SK-N-SH (cell line): ENCODE measurements at regions of chr5 and their contacts with region 1.

Region 1: DNA sequence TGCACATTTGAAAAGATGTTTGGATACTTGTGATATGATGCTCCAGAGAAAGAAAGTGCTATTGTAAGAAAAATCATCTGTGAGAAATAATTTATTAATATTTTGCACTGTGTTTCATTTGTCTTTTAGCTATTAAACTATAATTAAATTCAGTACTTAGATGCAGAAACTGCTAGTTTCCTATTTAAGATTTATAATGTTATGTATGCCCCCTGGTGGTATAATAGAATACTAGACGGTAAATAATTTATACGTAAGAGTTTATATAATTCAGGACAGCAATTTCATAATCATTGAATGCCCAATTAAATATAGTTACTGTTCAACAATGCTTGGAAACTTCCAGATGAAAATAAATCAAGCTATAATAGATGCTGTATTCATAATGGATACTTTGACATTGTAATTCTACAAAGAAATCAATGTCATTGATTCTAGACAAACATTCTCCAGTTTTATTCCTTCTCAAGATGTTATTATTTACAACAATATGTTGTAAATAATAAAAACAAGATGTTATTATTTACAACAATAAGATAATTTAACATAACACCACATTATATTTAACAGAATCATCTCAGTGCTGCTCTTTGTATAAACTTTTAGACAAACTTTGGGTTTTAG is 101.0 kb downstream of the TMEM232 start:
- DNase-seq: peak; percentile 12
- H3K4me3 ChIP-seq: no peak overlapping the region
- H3K27ac ChIP-seq: no peak overlapping the region
- H3K4me1 ChIP-seq: peaks cover 2 to 4% of the 10 kb centered on the region in 2 experiments; a peak in 2 of 4 replicates
- H3K27me3 ChIP-seq: no peaks in the 10 kb centered on the region
- CTCF ChIP-seq: peak; percentile 78
- EP300 ChIP-seq: no peak
- RAD21 ChIP-seq: peak; percentile 58

Region 2: GRCh38 chr5:109688971-109689739 is 936.3 kb before region 1 on chr5:
- CTCF ChIA-PET with region 1: interaction called, 10 read pairs
- POLR2A ChIA-PET with region 1: no interaction called
- DNase-seq: peak; percentile 96
- H3K4me3 ChIP-seq: peak overlapping the region; percentile 78 to 93
- H3K27ac ChIP-seq: peak overlapping the region; percentile 89 to 95
- H3K4me1 ChIP-seq: peaks cover 2 to 25% of the 10 kb centered on the region in 2 experiments; a peak in 3 of 4 replicates
- H3K27me3 ChIP-seq: no peaks in the 10 kb centered on the region
- CTCF ChIP-seq: no peak
- EP300 ChIP-seq: peak in 1 of 2 experiments; percentile 47; a peak in 2 of 4 replicates
- RAD21 ChIP-seq: no peak; the same call in 1 of the 2 replicates

Region 3: GRCh38 chr5:110441035-110441434 is 184.5 kb before region 1 on chr5:
- CTCF ChIA-PET with region 1: interaction called, 43 read pairs
- POLR2A ChIA-PET with region 1: no interaction called
- DNase-seq: peak; percentile 17
- H3K4me3 ChIP-seq: no peak overlapping the region
- H3K27ac ChIP-seq: no peak overlapping the region
- H3K4me1 ChIP-seq: no peaks in the 10 kb centered on the region
- H3K27me3 ChIP-seq: no peaks in the 10 kb centered on the region
- CTCF ChIP-seq: peak; percentile 64
- EP300 ChIP-seq: no peak
- RAD21 ChIP-seq: peak; percentile 83

Region 4: DNA sequence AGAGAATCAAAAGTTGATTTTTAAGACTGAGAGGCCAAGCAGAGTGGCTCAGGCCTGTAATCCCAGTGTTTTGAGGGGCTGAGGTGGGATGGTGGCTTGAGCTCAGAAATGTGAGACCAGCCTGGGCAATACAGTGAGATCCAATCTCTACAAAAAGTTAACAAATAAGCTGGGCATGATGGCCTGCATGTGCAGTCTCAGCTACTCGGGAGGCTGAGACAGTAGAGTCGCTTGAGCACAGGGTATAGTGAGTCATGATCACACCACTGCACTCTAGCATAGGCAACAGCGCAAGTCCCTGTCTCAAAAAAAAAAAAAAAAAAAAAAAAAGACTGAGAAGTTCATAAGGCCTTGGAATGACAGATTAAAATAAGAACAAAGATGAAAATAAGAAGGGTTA is 76.2 kb before region 1 on chr5:
- CTCF ChIA-PET with region 1: no interaction called
- POLR2A ChIA-PET with region 1: no interaction called
- DNase-seq: no peak
- H3K4me3 ChIP-seq: no peak overlapping the region
- H3K27ac ChIP-seq: no peak overlapping the region
- H3K4me1 ChIP-seq: no peaks in the 10 kb centered on the region
- H3K27me3 ChIP-seq: no peaks in the 10 kb centered on the region
- CTCF ChIP-seq: no peak
- EP300 ChIP-seq: no peak
- RAD21 ChIP-seq: no peak

Region 5: GRCh38 chr5:110612778-110613396 is 12.6 kb before region 1 on chr5:
- CTCF ChIA-PET with region 1: interaction called, 12 read pairs
- POLR2A ChIA-PET with region 1: no interaction called
- DNase-seq: peak; percentile 42
- H3K4me3 ChIP-seq: no peak overlapping the region
- H3K27ac ChIP-seq: peak overlapping the region in 1 of 2 experiments; percentile 28; a peak in 2 of 4 replicates
- H3K4me1 ChIP-seq: peaks cover 0 to 16% of the 10 kb centered on the region in 2 experiments; a peak in 2 of 4 replicates
- H3K27me3 ChIP-seq: no peaks in the 10 kb centered on the region
- CTCF ChIP-seq: no peak
- EP300 ChIP-seq: peak in 1 of 2 experiments; percentile 93; a peak in 2 of 4 replicates
- RAD21 ChIP-seq: peak; percentile 35; the same call in 1 of the 2 replicates

Region 6: DNA sequence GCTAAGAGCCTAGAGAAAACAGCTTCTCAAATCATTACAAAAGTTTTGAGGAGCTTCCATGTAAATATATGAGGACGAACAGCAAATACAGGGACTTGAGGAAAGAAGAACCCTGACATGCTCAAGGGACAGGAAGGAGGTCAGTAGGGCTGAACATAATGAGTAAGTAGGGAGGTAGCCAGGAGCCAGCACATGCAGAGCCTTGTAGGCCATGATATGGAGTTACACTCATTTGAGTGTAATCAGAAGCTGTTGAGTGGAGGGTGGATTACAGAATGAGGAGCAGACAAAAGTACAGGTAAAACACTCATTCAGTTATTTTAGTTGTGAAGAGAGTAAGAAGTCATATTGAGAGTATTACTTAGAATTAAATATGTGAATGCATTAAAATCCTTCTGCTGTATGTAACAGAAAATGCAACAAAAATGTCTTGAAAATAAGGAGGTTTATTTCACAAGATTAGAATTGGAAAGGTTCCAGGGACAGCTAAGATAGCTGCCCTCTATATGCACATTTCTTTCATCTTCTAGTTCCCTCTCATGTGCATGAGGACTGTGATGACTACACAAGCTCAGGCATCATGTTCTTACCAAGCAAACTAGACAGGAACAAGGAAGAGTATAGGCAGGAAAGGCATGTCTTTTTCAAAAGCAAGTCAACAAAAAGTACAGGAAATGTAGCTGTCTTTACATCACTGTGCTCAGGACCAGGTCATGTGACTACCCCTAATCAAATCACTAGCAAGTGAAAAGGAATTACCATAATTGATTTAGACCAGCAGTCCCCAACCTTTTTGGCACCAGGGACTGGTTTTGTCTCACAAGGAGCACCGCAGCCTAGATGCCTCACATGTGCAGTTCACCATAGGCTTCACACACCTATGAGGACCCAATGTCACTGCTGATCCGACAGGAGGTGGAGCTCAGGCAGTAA is 13.7 kb after region 1 on chr5:
- CTCF ChIA-PET with region 1: interaction called, 27 read pairs
- POLR2A ChIA-PET with region 1: no interaction called
- DNase-seq: no peak
- H3K4me3 ChIP-seq: no peak overlapping the region
- H3K27ac ChIP-seq: no peak overlapping the region
- H3K4me1 ChIP-seq: peaks cover 0 to 3% of the 10 kb centered on the region in 2 experiments; a peak in 2 of 4 replicates
- H3K27me3 ChIP-seq: no peaks in the 10 kb centered on the region
- CTCF ChIP-seq: no peak
- EP300 ChIP-seq: no peak
- RAD21 ChIP-seq: no peak

Region 7: GRCh38 chr5:110790673-110791072 is 165.2 kb after region 1 on chr5:
- CTCF ChIA-PET with region 1: no interaction called
- POLR2A ChIA-PET with region 1: no interaction called
- DNase-seq: peak; percentile 4
- H3K4me3 ChIP-seq: no peak overlapping the region
- H3K27ac ChIP-seq: no peak overlapping the region
- H3K4me1 ChIP-seq: no peaks in the 10 kb centered on the region
- H3K27me3 ChIP-seq: no peaks in the 10 kb centered on the region
- CTCF ChIP-seq: peak; percentile 56
- EP300 ChIP-seq: no peak
- RAD21 ChIP-seq: peak; percentile 78